Right cardiac atrium (tissue), 5 donors: ENCODE measurements at regions of chr17 and their contacts with region 1.

Region 1: DNA sequence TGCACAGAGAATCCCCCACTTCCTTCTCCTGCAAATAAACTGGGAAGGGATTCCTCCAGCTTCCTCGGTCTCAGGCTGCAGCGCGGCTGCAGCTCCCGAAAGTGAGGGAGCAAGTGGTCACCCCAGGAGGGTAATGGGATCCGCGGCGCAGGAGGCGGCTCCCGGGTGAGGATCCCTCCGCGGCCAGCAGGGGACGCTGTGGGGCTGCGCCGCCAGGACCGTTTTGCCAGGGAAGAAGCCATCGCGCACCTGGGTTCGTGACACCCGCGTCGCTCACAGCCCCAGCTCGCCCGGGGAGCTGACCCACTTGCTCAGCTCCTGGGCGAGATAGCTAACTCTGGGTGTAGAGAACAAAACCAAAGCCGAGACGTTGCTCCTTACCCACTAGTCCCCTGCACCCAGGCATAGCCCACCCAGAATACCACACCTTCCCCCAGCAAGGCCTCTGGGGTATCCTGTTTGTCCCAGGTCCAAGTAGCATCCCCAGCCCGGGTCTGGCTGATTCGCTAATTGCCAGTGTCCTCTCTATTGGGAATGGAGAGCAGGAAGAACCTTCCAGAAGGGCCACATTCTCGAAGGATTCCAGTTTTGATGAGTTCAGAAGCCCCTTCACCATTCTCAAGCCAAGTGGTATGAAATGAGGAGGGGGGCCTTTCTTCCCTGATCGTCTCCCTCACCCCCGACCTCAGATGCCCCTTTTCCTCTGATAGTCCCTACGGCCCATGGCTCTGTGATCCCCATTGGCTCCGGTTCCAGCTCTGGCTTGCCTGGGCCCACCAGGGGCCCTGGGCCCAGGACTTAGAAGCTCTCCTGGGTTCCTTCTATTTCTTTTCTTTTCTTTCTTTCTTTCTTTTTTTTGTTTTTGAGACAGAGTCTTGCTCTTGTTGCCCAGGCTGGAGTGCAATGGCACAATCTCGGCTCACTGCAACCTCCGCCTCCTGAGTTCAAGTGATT is 14.1 kb downstream of the CYGB start:
- DNase-seq: peak; percentile 72 to 91 (median 88)
- ATAC-seq: peak; percentile 34
- H3K4me3 ChIP-seq: no peak overlapping the region
- H3K27ac ChIP-seq: no peak overlapping the region
- H3K4me1 ChIP-seq: peaks cover 8% of the 10 kb centered on the region
- H3K27me3 ChIP-seq: no peaks in the 10 kb centered on the region

Region 2: DNA sequence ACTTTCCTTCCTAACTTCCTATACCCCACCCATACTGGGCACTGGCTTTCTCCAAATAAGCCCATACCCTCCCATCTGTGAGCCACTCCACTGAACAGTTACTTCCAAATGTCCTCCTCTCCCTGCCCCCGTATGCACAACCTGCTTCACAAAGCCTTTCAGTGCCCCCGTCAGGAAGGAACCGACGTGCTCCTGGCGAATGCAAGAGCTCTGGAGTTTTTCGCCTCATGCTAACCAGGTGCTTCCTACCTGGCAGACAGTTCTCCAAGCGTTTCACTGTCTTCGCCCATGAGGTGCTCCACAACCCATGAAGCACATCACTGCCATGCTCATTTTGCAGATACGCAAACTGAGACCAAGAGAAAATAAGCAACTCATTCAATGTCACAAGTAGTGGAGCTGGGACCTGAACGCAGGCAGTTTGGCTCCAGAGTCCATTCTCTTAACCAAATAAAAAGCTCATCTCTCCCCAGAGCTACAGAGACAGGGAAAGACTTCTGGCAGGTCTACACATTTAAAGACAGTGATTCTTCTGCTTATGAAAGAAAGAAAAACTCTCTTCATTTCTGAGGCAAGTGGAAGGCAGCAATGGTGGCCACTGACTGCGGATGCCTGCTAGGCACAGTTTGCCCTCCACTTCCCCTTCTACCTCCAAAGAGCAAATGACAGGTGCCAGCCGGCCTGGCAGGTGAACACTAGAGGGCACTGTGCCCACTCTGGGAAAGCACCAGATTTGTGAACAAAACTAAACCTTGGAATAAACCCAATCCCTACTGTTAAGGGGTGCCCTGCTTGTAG is 115.1 kb before region 1 on chr17:
- intact Hi-C with region 1: no loop called
- DNase-seq: peak in 2 of 3 donors; percentile 77 to 81
- ATAC-seq: no peak
- H3K4me3 ChIP-seq: no peak overlapping the region
- H3K27ac ChIP-seq: no peak overlapping the region
- H3K4me1 ChIP-seq: peaks cover 8% of the 10 kb centered on the region
- H3K27me3 ChIP-seq: no peaks in the 10 kb centered on the region

Region 3: DNA sequence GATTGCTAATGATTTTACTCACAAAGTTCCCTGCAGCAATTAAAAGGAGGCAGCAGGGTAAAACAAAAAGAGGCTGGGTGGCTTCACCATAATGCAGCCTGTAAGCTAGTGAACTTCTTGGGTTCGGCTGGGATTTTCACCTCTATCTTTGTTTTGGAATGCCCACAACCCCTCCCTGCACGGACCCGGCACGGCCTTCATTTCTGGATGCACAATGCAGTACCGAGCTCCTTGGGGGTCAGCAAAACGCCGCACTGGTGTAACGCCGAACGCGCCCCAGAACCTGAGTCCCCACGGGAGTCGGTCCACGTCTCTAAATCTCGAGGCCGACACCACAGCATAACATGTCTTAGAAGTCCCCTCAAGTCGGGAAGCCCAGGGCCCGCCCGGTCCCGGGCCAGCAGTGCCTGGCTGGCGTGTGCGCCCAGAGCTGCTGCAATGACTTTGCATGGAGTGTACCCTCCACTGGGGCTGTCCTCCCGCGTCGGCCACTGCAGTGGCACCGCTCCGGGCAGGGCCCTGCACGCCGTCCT is 71.2 kb before region 1 on chr17:
- intact Hi-C with region 1: no loop called
- DNase-seq: peak in 2 of 3 donors; percentile 60 to 64
- ATAC-seq: peak; percentile 42 to 55
- H3K4me3 ChIP-seq: peak overlapping the region; percentile 77
- H3K27ac ChIP-seq: peak overlapping the region; percentile 1
- H3K4me1 ChIP-seq: no peaks in the 10 kb centered on the region
- H3K27me3 ChIP-seq: no peaks in the 10 kb centered on the region

Region 4: DNA sequence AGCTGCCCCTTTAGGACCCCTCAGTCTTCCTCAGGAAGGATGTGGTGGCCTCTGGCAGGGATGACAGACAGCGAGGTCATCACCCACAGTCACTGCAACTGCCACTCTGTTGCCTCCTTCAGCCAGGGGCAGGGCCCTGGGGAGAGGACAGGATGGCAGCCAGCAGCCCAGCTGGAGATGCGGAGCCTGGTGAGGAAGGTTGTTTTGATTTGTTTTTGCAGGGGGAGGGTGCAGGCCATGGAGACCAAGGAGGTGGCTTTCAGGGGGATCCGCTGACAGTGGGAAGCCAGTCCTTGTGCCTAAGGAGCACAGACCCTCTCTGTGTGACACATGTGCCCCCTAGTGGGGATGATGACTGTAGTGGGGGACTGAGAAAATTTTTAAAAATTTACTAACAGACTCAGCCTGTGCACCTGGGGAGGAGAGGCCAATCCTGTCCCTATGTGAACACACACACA is 23.9 kb after region 1 on chr17:
- intact Hi-C with region 1: loop called in 1 of 4 experiments (anchors 2 kb)
- DNase-seq: peak in 2 of 3 donors; percentile 79 to 85
- ATAC-seq: peak; percentile 59 to 73
- H3K4me3 ChIP-seq: no peak overlapping the region
- H3K27ac ChIP-seq: peak overlapping the region; percentile 2
- H3K4me1 ChIP-seq: peaks cover 32% of the 10 kb centered on the region
- H3K27me3 ChIP-seq: no peaks in the 10 kb centered on the region

Region 5: DNA sequence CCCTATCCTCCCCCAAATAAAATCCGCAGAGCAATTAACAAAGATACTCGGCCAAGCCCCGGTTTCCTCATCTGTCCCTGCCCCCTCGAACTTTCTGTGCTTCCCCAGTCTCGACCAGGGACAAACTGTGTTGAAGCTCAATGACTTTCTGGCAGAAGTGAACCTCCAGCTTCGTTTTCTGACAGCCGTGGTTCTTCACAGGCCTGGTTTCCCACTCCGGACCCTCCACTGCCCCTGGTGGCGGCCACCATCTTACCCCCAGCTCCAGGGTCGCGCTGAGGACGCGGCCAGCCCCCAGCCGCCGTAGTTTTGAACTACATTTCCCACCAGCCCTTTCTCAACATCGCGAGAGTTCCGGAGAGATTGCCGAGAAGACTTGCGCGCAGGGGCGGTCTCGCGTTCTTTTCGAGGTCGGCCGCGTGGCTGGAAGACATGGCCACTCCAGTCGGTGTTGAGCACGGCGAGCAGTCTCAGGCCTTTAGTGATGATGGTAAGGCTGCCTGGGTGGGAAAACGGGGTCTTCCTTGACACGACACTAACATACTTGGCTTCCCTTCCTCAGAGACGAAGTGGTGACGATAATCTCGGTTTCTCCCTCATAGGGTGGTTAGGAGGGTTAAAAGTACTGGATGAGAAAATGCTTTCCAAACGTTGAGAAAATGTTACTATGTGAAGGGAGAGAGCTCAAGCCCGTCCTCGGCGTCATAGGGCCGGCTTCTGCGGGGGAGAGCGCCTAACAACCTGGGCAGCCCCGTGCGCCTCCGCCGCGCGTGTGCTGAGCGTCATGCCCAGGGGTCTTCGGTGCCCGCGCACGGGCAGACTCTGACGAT is 34.2 kb after region 1 on chr17:
- intact Hi-C with region 1: loop called in 1 of 4 experiments (anchors 5 kb)
- DNase-seq: peak; percentile 95 to 97 (median 97)
- ATAC-seq: peak; percentile 93 to 94
- H3K4me3 ChIP-seq: peak overlapping the region; percentile 80
- H3K27ac ChIP-seq: peak overlapping the region; percentile 92
- H3K4me1 ChIP-seq: peaks cover 2% of the 10 kb centered on the region
- H3K27me3 ChIP-seq: no peaks in the 10 kb centered on the region

Region 6: DNA sequence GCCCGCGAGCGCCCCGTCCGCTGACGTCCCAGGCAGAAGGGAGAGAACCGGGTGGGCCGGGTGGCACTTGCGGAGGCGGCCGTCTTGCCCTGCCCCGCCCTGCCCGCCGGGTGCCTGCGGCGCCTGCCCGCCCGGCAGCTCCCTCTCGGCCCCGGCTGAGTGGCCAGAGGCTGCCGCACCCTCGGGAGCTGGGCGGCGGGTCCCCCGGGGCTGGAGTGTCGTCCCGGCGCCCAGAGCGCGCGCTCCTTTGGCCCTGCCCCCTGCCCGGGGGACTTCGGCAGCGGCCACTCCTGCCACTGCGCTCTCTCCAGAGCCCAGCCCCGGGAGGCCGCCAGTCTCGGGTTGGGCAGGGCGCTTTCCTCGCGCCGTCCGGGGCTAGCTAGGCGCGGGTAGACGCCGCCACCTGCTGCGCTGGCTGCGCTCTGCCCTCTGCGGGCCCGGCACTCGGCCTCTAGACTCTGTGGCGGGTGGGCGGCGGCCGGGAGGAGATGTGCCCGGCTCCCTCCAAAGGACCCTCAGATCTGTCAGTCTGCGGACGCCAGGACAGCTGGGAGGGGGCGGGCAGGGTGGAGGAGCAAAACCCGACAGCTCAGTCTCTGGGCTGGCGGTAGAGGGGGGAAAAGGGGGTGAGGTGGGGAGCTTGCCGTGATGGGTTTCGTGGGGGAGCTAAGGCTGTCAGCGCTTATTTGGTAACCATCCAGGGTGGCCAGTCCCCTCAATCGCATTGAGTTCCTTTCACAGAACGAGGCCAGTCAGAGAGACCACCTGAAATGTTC is 62.6 kb after region 1 on chr17 and contains the start of gene ST6GALNAC2:
- intact Hi-C with region 1: loop called in 2 of 4 experiments (anchors 5 to 10 kb)
- DNase-seq: peak; percentile 71 to 86 (median 85)
- ATAC-seq: peak; percentile 89 to 92
- H3K4me3 ChIP-seq: peak within 1 kb of the TSS; percentile 55
- H3K27ac ChIP-seq: no peak within 1 kb of the TSS
- H3K4me1 ChIP-seq: no peaks in the 10 kb centered on the region
- H3K27me3 ChIP-seq: no peaks in the 10 kb centered on the region
- total RNA-seq, gene ST6GALNAC2: 4.0 to 5.8 (median 5.5) TPM

Region 7: DNA sequence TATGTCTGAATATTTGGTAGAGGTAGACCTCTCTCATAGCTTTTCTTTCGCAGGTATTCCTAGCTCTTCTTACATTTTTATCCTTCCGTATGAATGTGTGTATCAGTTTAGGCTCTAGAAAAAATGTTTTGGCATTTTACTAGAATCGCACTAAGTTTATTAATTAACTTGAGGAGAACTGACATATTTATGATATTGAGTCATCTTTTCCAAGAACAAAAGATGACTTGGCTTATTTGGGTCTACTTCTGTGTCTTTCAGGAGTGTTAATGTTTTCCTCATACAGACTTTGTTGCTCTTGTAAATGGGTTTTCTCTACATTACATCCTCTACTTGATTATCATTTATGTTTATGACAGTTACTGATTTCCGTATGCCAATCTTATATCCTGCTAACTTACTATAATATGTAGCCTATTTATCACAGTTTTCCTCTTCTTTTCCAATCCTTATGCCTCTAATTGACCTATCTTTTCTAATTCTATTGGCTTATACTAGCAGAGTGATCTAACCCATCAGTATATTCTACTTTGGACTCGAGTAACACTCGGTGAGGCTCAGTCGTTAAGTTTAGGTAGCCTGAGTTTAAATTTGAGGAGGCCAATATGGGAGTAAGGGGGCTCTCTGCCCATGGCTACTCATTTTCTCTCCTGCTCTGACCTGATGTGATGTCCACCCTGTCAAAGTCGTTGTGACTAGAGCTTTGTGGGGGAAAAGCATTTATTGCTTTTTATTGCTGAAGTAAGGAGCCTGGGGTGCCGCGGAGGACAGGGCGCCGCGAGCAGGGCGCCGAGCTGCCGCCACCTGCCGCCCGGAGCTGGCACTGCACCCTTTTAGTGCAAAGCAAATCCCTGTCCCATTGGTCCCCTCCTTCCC is 100.1 kb after region 1 on chr17:
- intact Hi-C with region 1: loop called in 3 of 4 experiments (anchors 5 to 10 kb)
- DNase-seq: peak; percentile 74 to 91 (median 90)
- ATAC-seq: peak; percentile 87 to 91
- H3K4me3 ChIP-seq: no peak overlapping the region
- H3K27ac ChIP-seq: no peak overlapping the region
- H3K4me1 ChIP-seq: no peaks in the 10 kb centered on the region
- H3K27me3 ChIP-seq: no peaks in the 10 kb centered on the region